Left colon (tissue), 2 donors: ENCODE measurements at regions of chr14 and their contacts with region 1.

Region 1: DNA sequence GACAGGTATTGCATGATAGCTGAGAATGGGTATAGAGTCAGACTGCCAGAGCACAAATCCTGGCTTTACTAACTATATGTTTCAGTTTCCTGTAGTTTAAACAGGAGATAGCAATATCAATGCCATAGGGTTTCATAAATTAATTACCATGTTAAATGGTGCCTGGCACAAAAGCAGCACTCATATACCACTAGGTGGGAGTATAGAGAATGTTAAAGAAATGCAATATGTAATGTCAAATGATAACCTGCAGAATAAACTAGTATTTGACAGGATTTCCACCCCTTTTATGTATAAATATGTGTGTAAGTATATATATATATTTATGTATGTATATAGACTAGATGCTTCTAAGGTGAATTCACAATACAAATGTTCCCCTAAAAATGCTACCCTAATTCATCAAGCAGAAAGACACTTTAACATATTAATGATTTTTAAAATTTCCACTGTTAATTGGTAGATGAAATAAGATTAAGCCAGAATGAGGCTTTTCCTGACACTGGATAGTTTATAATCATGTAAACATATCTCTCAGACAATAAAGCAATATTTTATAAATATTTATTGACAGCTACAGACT is 8.6 kb downstream of the WDR89 start:
- DNase-seq: no peak
- ATAC-seq: peak; percentile 69

Region 2: DNA sequence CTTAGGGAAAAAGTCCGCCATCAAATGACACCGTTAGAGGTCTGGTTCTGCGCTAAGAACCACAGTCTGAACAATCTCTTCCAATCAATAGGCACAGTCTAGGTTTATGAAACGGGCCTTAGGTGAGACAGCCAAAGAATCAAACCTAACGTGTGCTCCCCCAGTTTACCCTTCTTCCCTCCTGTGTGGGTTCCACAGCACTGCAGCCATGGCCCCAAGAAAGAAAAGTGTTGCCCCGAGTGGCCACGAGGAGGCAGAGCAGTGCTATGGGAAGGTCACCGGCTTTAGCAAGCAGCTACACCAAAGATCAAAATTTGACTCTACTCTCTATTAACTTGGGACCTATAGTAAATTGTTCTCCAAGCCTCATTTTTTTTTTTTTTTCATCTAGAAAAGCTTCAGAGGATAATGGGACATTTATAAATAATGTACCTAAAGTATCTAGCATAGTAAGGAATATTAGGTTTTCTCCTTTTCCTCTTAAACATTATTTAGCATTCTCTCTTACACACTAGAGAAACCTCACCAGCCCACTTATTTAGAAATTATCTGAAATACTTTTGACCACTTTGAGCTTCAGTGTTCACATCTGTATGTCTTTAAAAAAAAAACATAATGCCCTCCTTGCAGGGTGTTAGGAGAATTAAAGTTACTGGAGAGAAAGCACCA is 244.1 kb before region 1 on chr14:
- intact Hi-C with region 1: loop called in 1 of 2 experiments (anchors 5 kb)
- DNase-seq: peak; percentile 46 to 64
- ATAC-seq: peak; percentile 78

Region 3: GRCh38 chr14:63493246-63493645 is 139.8 kb before region 1 on chr14:
- intact Hi-C with region 1: no loop called
- DNase-seq: no peak
- ATAC-seq: peak; percentile 56

Region 4: DNA sequence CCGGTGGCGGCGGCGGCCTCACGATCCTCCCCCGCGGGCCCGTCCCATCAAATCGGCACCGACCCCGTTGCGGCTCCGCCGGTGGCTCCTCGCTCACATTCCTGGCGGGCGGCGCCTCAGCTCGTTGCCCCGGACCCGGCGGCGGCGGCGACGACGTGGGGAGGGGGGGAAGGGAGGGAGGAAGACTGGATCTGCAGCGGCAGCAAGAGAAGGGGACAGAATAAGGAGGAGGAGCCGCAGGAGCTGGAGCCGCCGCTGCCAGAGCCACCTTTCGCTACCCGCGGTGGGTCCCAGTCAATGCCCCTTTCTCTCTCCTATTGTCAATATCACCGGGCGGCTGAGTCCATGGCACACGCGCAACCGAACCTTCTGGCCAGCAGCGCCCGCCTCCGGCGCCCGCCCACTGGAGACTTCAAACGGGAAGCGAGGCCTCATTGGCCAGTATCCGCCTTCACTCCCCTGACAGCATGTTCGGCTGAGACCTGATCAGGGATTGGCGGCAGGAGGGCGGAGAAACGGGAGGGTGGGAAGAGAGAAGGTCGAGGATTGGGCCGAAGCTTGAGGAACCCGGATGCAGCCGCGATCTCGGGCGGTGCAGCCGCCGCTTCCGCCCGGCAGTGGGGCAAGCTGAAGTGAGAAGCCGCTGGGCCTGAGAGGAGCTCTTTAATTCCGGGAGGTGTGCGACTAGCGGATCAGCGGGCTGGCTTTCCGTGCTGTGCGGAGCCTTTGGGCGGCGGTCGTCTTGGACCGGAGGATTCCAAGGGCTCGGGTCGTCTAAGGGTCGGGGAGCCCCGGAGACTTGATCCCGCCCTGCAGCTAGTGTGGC is 89.8 kb before region 1 on chr14 and contains the start of gene PPP2R5E:
- intact Hi-C with region 1: loop called in 1 of 2 experiments (anchors 10 kb)
- DNase-seq: peak; percentile 96 to 99
- ATAC-seq: peak; percentile 92
- total RNA-seq, gene PPP2R5E: 54.2 to 57.2 TPM

Region 5: GRCh38 chr14:63760014-63760413 is 127.0 kb after region 1 on chr14:
- intact Hi-C with region 1: loop called in 1 of 2 experiments (anchors 10 kb)
- DNase-seq: no peak
- ATAC-seq: no peak